ENCODE measurements at regions of chr11 and their contacts with region 1.

Region 1: DNA sequence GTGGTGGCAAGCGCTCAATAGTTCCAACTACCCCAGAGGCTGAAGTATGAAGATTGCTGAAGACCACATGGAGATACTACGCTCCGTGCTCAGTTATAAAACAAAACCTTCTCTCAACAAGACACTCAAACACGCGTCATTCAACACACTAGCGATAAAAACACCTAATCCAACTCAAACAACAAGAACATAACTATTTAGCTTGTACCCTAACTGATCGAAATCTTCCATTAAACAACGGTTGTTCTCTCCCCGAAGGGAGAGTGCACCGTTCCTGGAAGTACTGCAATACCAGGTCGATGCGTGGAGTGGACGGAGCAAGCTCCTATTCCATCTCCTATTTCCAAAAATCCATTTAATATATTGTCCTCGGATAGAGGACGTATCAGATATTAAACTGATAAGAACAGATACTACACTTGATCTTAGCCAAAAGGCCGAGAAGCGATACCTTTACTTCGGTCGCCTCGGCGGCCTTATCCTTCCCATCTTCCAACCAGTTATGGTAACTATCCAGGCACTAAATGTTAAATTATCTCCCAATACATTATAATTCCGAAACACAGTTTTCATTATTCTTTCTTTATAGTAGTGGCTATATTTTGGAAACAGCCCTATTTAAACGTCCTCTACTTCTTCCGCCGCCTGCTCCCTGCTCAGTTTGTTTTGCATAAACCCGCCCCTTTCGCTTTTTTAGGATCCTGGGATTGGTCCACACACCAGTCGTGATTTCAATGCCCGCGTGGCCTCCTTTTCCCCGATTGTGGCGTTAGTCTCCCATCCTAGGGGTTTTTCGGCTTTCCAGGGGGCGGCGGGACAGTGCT is 2.2 kb upstream of the WDR74 start:
- DNase-seq: peak; percentile 95
- H3K4me3 Mint-ChIP-seq: no peak overlapping the region
- H3K27ac Mint-ChIP-seq: no peak overlapping the region
- H3K4me1 Mint-ChIP-seq: peaks cover 26% of the 10 kb centered on the region
- H3K27me3 Mint-ChIP-seq: no peaks in the 10 kb centered on the region

Region 2: GRCh38 chr11:62855571-62856332 is 14.2 kb after region 1 on chr11:
- intact Hi-C with region 1: loop called (anchors 1 kb)
- DNase-seq: peak; percentile 100
- H3K4me3 Mint-ChIP-seq: peak overlapping the region; percentile 97
- H3K27ac Mint-ChIP-seq: peak overlapping the region; percentile 98
- H3K4me1 Mint-ChIP-seq: peaks cover 55% of the 10 kb centered on the region
- H3K27me3 Mint-ChIP-seq: peaks cover 7% of the 10 kb centered on the region